Activated B cell treated with CpG ODN at 0.5 μM for 24 hours (primary cell): ENCODE measurements at regions of chr14 and their contacts with region 1.

Region 1: DNA sequence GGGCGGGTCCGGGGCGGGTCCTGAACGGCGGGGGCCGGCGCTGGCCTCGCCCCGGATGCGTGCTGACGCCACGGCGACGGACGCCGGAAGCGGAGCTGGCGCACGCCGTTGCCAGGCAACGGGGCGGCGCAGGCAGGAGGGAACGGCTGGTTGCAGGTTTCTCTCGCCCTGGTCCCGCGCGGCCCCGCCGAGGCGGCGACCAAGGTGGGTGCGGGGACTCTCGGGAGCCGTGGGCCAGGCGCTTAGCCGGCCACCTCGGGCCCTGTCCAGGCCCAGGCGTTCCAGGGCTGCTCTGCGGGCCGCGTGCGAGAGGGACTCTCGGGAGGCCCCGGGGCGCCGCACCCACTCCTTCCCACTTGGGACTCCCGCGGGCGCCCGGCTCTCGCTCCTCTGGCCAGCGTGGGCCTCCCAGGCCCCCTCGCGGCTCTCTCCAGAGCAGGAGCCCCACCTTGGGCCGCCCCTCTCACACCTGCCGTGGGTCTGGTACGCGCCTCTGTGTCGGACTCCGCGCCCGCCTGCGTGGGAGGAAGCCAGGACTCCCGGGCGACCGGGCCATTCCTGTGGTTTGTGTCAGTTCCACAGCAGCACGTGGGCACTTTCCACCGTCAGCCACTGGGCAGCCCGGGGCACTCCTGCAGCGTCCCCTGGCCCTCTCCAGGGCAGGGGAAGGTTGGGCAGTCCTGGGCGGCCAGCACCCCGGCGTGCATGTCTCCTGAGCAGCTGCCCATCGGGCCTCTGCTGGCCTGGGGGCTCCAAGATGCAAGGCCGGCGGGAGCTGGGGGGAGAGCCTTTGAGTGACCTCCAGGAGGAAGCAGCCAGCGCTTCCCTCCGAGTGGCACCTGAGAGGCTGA is at the start of gene CLBA1:
- DNase-seq: peak; percentile 88
- ATAC-seq: peak; percentile 92
- H3K4me3 Mint-ChIP-seq: peak within 1 kb of the TSS; percentile 72
- H3K27ac Mint-ChIP-seq: peak within 1 kb of the TSS; percentile 71
- H3K4me1 Mint-ChIP-seq: peaks cover 11% of the 10 kb centered on the region
- H3K27me3 Mint-ChIP-seq: peaks cover 5% of the 10 kb centered on the region
- CTCF ChIP-seq: no peak
- total RNA-seq, gene CLBA1: 2.7 and 3.9 TPM in 2 replicates

Region 2: GRCh38 chr14:105020815-105021655 is 35.1 kb after region 1 on chr14 and contains the start of gene CDCA4:
- CTCF ChIA-PET with region 1: no interaction called
- POLR2A ChIA-PET with region 1: interaction called, 20 read pairs
- intact Hi-C with region 1: loop called (anchors 1 kb)
- DNase-seq: peak; percentile 97
- ATAC-seq: peak; percentile 84
- H3K4me3 Mint-ChIP-seq: peak within 1 kb of the TSS; percentile 92
- H3K27ac Mint-ChIP-seq: peak within 1 kb of the TSS; percentile 94
- H3K4me1 Mint-ChIP-seq: peaks cover 62% of the 10 kb centered on the region
- H3K27me3 Mint-ChIP-seq: no peaks in the 10 kb centered on the region
- CTCF ChIP-seq: no peak
- total RNA-seq, gene CDCA4: 11.7 and 13.6 TPM in 2 replicates

Region 3: DNA sequence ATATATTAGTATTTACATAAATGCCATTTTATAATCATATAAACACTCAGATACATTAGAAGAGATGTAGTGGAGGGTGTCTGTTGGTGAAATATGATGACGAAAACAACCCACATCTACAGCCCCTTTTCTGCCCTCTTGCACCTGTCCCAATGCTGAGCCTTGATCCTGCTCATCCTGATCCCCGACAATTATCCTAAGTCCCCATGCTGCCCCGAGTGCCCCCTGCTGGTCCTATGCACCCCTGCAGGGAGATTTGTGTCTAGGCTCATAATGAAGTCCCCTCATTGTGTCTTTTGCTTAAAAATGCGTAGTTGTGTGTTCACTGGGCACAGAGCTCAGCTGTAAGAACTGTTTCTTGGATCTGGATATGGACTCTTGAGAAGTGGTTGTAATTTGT is 1095.0 kb after region 1 on chr14:
- CTCF ChIA-PET with region 1: no interaction called
- POLR2A ChIA-PET with region 1: no interaction called
- intact Hi-C with region 1: no loop called
- DNase-seq: no peak
- ATAC-seq: no peak
- H3K4me3 Mint-ChIP-seq: no peak overlapping the region
- H3K27ac Mint-ChIP-seq: no peak overlapping the region
- H3K4me1 Mint-ChIP-seq: no peaks in the 10 kb centered on the region
- H3K27me3 Mint-ChIP-seq: no peaks in the 10 kb centered on the region
- CTCF ChIP-seq: no peak